ENCODE measurements at regions of chr12 and their contacts with region 1.

Region 1: DNA sequence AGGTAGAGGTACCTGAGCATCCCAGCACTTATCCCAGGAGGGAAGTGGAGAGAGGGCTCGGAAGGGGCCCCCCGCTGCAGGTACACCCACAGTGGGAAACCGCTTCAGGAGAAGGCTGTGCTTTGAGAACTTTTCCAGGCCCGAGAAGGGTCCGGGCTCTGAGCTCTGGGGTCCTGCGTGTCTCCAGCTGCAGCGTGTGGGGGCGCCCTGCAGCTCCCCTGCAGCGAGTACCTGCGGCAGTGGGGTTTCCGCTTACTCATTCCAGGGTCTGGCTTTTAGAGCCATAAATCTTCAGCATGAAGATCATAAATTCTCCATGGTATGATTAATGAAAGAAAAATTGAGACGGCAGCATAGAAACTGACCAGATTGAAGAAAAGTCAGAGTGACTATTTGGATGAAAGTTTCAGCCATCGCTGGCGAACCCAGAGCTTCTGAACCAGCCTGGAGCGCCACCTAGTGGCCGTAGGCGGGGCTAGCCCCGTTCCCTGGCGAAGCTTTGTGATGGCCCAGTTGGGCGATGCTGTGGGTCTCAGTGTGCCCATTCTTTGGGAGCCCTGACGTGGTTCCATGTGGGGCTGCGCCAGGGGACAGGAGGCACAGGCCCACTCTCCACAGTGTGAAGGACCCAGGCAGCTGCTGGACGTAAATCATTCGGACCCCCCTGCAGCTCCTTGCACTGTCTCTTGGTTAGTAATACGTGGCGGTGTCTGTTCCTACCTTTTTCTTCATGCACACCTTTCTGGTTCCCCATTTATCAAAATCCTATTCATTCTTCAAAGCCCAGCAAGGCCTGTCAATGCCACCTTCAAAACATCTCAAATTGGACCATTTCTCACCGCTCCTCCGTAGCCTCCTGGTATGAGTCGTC is 198.2 kb downstream of the TSPAN9 start:
- DNase-seq: peak; percentile 20
- ATAC-seq: peak; percentile 88
- H3K4me3 ChIP-seq: no peak overlapping the region
- H3K27ac ChIP-seq: no peak overlapping the region
- H3K4me1 ChIP-seq: no peaks in the 10 kb centered on the region
- H3K27me3 ChIP-seq: no peaks in the 10 kb centered on the region
- CTCF ChIP-seq: peak; percentile 90

Region 2: GRCh38 chr12:3135522-3136461 is 139.6 kb before region 1 on chr12:
- CTCF ChIA-PET with region 1: interaction called, 3 read pairs
- POLR2A ChIA-PET with region 1: no interaction called
- in situ Hi-C with region 1: no loop called
- intact Hi-C with region 1: loop called (anchors 1 kb)
- DNase-seq: peak; percentile 46
- ATAC-seq: peak; percentile 89
- H3K4me3 ChIP-seq: no peak overlapping the region
- H3K27ac ChIP-seq: no peak overlapping the region
- H3K4me1 ChIP-seq: no peaks in the 10 kb centered on the region
- H3K27me3 ChIP-seq: no peaks in the 10 kb centered on the region
- CTCF ChIP-seq: peak; percentile 75

Region 3: GRCh38 chr12:3491938-3492792 is 216.8 kb after region 1 on chr12:
- CTCF ChIA-PET with region 1: no interaction called
- POLR2A ChIA-PET with region 1: no interaction called
- in situ Hi-C with region 1: no loop called
- intact Hi-C with region 1: no loop called
- DNase-seq: no peak
- ATAC-seq: peak; percentile 84
- H3K4me3 ChIP-seq: no peak overlapping the region
- H3K27ac ChIP-seq: no peak overlapping the region
- H3K4me1 ChIP-seq: no peaks in the 10 kb centered on the region
- H3K27me3 ChIP-seq: peaks cover 2% of the 10 kb centered on the region
- CTCF ChIP-seq: no peak